ENCODE measurements at regions of chr1 and their contacts with region 1.

Region 1: GRCh38 chr1:171644805-171645483 is 7.5 kb downstream of the MYOC start:
- DNase-seq: peak; percentile 87
- ATAC-seq: peak; percentile 98
- H3K4me3 Mint-ChIP-seq: no peak overlapping the region
- H3K27ac Mint-ChIP-seq: no peak overlapping the region
- H3K4me1 Mint-ChIP-seq: peaks cover 4% of the 10 kb centered on the region
- H3K27me3 Mint-ChIP-seq: no peaks in the 10 kb centered on the region
- CTCF ChIP-seq: peak; percentile 76

Region 2: GRCh38 chr1:171623651-171624331 is 21.2 kb before region 1 on chr1:
- CTCF ChIA-PET with region 1: interaction called, 22 read pairs
- POLR2A ChIA-PET with region 1: no interaction called
- intact Hi-C with region 1: no loop called
- DNase-seq: no peak
- ATAC-seq: no peak
- H3K4me3 Mint-ChIP-seq: no peak overlapping the region
- H3K27ac Mint-ChIP-seq: no peak overlapping the region
- H3K4me1 Mint-ChIP-seq: no peaks in the 10 kb centered on the region
- H3K27me3 Mint-ChIP-seq: peaks cover 3% of the 10 kb centered on the region
- CTCF ChIP-seq: no peak

Region 3: DNA sequence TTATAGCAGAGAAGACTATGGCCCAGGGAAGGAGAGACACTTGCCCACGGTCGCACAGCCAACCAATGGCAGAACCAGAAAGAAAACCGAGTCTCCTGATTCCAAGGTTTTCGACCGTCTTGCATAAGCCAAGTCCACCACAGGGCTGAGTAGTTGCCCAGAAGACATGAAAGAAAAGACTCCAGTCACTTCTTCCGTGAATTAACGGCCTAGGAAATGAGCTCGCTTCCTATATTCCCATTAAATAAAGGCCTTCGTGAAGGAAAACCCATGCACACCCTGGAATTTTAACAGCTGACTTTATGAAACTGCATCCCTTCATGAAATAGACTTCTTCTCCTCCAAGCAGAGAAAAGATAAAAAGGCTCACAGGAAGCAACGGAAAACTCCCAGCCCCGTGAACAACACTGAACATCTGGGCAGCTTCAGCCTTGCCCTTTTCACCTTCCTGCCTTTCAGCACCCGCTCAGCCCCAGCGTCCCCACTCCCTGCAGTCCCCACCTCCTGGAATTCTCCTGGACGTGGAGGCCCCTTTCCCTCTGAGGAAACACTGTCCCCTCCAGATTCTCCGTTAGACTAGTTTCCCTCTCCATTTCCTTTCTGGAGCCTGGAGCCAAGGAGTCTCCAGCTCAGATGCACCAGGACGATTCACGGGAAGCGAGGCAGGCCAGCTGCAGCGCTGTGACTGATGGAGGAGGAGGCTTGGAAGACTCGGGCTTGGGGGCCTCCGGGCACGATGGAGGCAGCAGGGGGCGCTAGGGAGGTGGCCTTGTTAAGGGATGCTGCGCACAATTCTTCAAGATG is 10.2 kb after region 1 on chr1:
- CTCF ChIA-PET with region 1: interaction called, 50 read pairs
- POLR2A ChIA-PET with region 1: no interaction called
- intact Hi-C with region 1: no loop called
- DNase-seq: peak; percentile 90
- ATAC-seq: peak; percentile 89
- H3K4me3 Mint-ChIP-seq: no peak overlapping the region
- H3K27ac Mint-ChIP-seq: no peak overlapping the region
- H3K4me1 Mint-ChIP-seq: peaks cover 9% of the 10 kb centered on the region
- H3K27me3 Mint-ChIP-seq: peaks cover 11% of the 10 kb centered on the region
- CTCF ChIP-seq: peak; percentile 83

Region 4: GRCh38 chr1:171715813-171716251 is 70.9 kb after region 1 on chr1:
- CTCF ChIA-PET with region 1: interaction called, 24 read pairs
- POLR2A ChIA-PET with region 1: no interaction called
- intact Hi-C with region 1: loop called (anchors 10 kb)
- DNase-seq: no peak
- ATAC-seq: no peak
- H3K4me3 Mint-ChIP-seq: no peak overlapping the region
- H3K27ac Mint-ChIP-seq: no peak overlapping the region
- H3K4me1 Mint-ChIP-seq: peaks cover 7% of the 10 kb centered on the region
- H3K27me3 Mint-ChIP-seq: no peaks in the 10 kb centered on the region
- CTCF ChIP-seq: peak; percentile 58

Region 5: GRCh38 chr1:171741872-171742576 is 97.1 kb after region 1 on chr1 and contains the start of gene VAMP4:
- CTCF ChIA-PET with region 1: interaction called, 19 read pairs
- POLR2A ChIA-PET with region 1: no interaction called
- intact Hi-C with region 1: no loop called
- DNase-seq: peak; percentile 90
- ATAC-seq: peak; percentile 90
- H3K4me3 Mint-ChIP-seq: peak within 1 kb of the TSS; percentile 97
- H3K27ac Mint-ChIP-seq: peak within 1 kb of the TSS; percentile 100
- H3K4me1 Mint-ChIP-seq: peaks cover 46% of the 10 kb centered on the region
- H3K27me3 Mint-ChIP-seq: no peaks in the 10 kb centered on the region
- CTCF ChIP-seq: no peak
- total RNA-seq, gene VAMP4: 6.1 to 6.2 TPM

Region 6: GRCh38 chr1:171781176-171781875 is 136.4 kb after region 1 on chr1 and contains the start of gene METTL13:
- CTCF ChIA-PET with region 1: interaction called, 10 read pairs
- POLR2A ChIA-PET with region 1: no interaction called
- intact Hi-C with region 1: no loop called
- DNase-seq: peak; percentile 99
- ATAC-seq: peak; percentile 96
- H3K4me3 Mint-ChIP-seq: peak within 1 kb of the TSS; percentile 94
- H3K27ac Mint-ChIP-seq: peak within 1 kb of the TSS; percentile 95
- H3K4me1 Mint-ChIP-seq: peaks cover 45% of the 10 kb centered on the region
- H3K27me3 Mint-ChIP-seq: no peaks in the 10 kb centered on the region
- CTCF ChIP-seq: no peak
- total RNA-seq, gene METTL13: 44.6 to 46.6 TPM

Region 7: DNA sequence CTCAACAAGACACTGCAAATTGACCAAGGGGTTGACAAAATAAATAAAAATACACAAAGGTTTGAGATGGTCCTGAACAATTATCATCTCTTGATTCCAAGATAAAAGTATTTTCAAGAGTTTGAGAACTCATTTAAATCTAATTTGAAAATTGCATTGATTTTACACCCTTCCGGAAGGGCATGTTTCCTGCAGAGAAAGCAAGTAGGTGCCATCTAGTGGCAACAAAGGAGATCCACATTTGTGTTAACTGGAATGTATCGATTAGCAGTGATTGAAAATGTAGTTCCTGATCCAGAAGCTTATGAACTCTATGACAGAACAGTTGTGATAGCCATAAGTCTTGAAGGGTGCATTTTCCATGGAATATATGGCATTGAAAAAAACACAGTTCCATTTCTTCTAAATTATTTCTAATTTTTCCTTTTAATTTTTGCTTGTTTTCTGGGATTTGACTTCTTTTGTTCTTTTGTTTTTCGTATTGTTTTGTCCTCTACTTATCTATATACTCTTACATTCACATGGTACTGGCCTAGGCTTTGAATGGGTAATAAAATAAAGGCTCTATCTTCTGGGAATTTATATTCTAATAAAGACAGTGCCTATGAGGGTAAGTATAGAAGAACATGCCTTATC is 340.0 kb after region 1 on chr1:
- CTCF ChIA-PET with region 1: interaction called, 48 read pairs
- POLR2A ChIA-PET with region 1: no interaction called
- intact Hi-C with region 1: loop called (anchors 5 kb)
- DNase-seq: no peak
- ATAC-seq: no peak
- H3K4me3 Mint-ChIP-seq: no peak overlapping the region
- H3K27ac Mint-ChIP-seq: no peak overlapping the region
- H3K4me1 Mint-ChIP-seq: no peaks in the 10 kb centered on the region
- H3K27me3 Mint-ChIP-seq: peaks cover 1% of the 10 kb centered on the region
- CTCF ChIP-seq: peak; percentile 81

Measured in activated CD8-positive, alpha-beta T cell treated with anti-CD3 and anti-CD28 coated beads for 36 hours (primary cell).